Psoas muscle (tissue), 8 donors: ENCODE measurements at regions of chr10 and their contacts with region 1.

Region 1: GRCh38 chr10:33801748-33802147 is 467.3 kb upstream of the NRP1 start:
- DNase-seq: peak in 1 of 2 donors; percentile 57
- ATAC-seq: peak; percentile 91 to 94 (median 94)
- H3K4me3 ChIP-seq: no peak overlapping the region
- H3K27ac ChIP-seq: peak overlapping the region; percentile 95
- H3K4me1 ChIP-seq: peaks cover 49% of the 10 kb centered on the region
- H3K27me3 ChIP-seq: no peaks in the 10 kb centered on the region
- CTCF ChIP-seq: no peak

Region 2: DNA sequence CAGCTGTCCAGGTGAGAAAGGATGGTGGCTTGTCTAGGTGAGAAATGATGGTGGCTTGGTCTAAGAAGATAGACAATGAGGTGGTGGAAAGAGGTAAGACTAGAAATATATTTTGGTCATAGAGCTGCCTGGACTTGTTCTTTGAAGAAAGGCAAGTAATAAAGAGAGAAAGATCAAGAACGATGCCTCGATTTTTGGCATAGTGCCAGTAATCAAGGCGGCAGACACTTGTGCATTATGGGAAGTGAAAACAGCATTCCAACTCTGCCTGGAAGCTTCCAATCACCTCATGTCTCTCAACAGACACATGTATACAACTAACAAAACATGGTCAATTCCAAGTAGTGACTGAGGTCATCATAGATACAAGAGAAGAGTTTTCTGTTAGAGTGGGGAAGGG is 43.4 kb before region 1 on chr10:
- intact Hi-C with region 1: loop called in 1 of 2 experiments (anchors 5 kb)
- DNase-seq: no peak
- ATAC-seq: no peak
- H3K4me3 ChIP-seq: no peak overlapping the region
- H3K27ac ChIP-seq: no peak overlapping the region
- H3K4me1 ChIP-seq: no peaks in the 10 kb centered on the region
- H3K27me3 ChIP-seq: no peaks in the 10 kb centered on the region
- CTCF ChIP-seq: no peak

Region 3: DNA sequence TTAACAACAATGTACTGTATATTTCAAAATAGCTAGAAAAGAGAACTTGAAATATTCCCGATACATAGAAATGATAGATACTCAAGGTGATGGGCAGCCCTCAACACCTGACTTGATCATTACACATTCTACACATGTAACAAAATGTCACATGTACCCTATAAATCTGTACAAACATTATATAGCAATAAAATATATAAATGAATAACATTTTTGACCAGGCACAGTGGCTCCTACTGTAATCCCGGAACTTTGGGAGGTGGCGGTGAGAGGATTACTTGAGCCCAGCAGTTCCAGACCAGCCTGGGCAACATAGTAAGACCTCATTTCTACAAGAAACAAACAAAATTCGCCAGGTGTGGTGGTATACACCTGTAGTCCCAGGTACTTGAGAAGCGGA is 192.2 kb after region 1 on chr10:
- intact Hi-C with region 1: no loop called
- DNase-seq: no peak
- ATAC-seq: no peak
- H3K4me3 ChIP-seq: no peak overlapping the region
- H3K27ac ChIP-seq: no peak overlapping the region
- H3K4me1 ChIP-seq: no peaks in the 10 kb centered on the region
- H3K27me3 ChIP-seq: no peaks in the 10 kb centered on the region
- CTCF ChIP-seq: no peak